Activated B cell treated with CpG ODN at 0.5 μM for 24 hours (primary cell): ENCODE measurements at regions of chr11 and their contacts with region 1.

Region 1: GRCh38 chr11:6481012-6481923 is at the starts of genes ARFIP2 and TIMM10B:
- DNase-seq: peak; percentile 92
- ATAC-seq: peak; percentile 95
- H3K4me3 Mint-ChIP-seq: peak within 1 kb of the TSS; percentile 95
- H3K27ac Mint-ChIP-seq: peak within 1 kb of the TSS; percentile 97
- H3K4me1 Mint-ChIP-seq: peaks cover 42% of the 10 kb centered on the region
- H3K27me3 Mint-ChIP-seq: no peaks in the 10 kb centered on the region
- CTCF ChIP-seq: no peak
- total RNA-seq, gene ARFIP2: 40.6 and 43.1 TPM in 2 replicates
- total RNA-seq, gene TIMM10B: 48.0 and 60.0 TPM in 2 replicates

Region 2: DNA sequence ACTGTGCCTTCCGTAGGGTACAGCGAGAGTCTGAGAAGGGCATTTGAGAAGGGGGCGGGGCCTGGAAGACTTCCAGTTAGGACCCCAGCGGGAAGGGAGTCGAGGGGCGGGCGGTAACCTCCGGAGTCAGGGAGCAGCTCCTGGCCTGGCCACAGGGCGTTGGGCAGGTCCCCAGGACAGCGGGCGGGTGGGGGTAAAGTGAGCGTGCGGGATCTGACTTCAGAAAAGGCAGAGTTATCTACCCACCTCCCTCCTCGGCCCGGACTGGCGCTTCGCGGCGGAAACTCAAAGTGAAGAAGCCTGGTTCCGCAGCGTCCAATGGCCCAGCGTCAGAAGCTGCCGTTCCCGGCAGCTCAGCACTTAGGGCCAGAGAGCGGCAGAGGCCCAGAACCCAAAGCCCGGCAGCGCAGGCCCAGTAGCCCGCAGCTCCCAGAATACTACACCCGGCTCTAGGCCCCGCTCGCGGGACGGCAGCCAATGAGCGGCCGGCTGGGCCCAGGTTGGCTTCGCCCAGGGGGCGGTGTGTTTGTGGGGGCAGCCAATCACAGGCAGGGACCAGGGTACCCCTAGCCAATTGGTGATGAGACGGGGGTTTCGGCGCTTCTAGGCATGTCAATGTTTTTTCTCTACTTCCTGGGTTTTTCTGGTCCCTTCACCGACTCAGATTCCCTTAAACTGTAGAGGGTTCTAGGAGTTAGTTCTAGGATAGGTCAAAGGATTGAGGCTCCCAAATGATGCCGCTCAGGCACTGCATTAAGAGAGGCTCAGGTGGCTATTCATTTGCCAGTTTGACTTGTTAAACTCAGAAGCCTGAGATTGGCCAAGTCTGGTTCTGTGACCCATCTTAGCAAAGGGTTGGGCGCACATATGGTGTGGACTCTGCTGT is 1873.2 kb before region 1 on chr11 and contains the start of gene TRIM68:
- CTCF ChIA-PET with region 1: no interaction called
- POLR2A ChIA-PET with region 1: no interaction called
- intact Hi-C with region 1: loop called (anchors 5 kb)
- DNase-seq: peak; percentile 87
- ATAC-seq: peak; percentile 100
- H3K4me3 Mint-ChIP-seq: peak within 1 kb of the TSS; percentile 95
- H3K27ac Mint-ChIP-seq: peak within 1 kb of the TSS; percentile 91
- H3K4me1 Mint-ChIP-seq: peaks cover 43% of the 10 kb centered on the region
- H3K27me3 Mint-ChIP-seq: no peaks in the 10 kb centered on the region
- CTCF ChIP-seq: no peak
- total RNA-seq, gene TRIM68: 15.2 and 16.9 TPM in 2 replicates

Region 3: GRCh38 chr11:6389921-6390724 is 91.1 kb before region 1 on chr11 and contains the start of gene SMPD1:
- CTCF ChIA-PET with region 1: interaction called, 3 read pairs
- POLR2A ChIA-PET with region 1: interaction called, 14 read pairs
- intact Hi-C with region 1: loop called (anchors 1 kb)
- DNase-seq: peak; percentile 86
- ATAC-seq: peak; percentile 93
- H3K4me3 Mint-ChIP-seq: peak within 1 kb of the TSS; percentile 95
- H3K27ac Mint-ChIP-seq: peak within 1 kb of the TSS; percentile 99
- H3K4me1 Mint-ChIP-seq: peaks cover 36% of the 10 kb centered on the region
- H3K27me3 Mint-ChIP-seq: no peaks in the 10 kb centered on the region
- CTCF ChIP-seq: no peak
- total RNA-seq, gene SMPD1: 14.1 and 16.9 TPM in 2 replicates

Region 4: GRCh38 chr11:6603287-6604080 is 122.2 kb after region 1 on chr11 and contains the starts of genes ILK and RRP8:
- CTCF ChIA-PET with region 1: no interaction called
- POLR2A ChIA-PET with region 1: interaction called, 9 read pairs
- intact Hi-C with region 1: loop called (anchors 1 kb)
- DNase-seq: peak; percentile 78
- ATAC-seq: peak; percentile 88
- H3K4me3 Mint-ChIP-seq: no peak within 1 kb of the TSS
- H3K27ac Mint-ChIP-seq: no peak within 1 kb of the TSS
- H3K4me1 Mint-ChIP-seq: peaks cover 10% of the 10 kb centered on the region
- H3K27me3 Mint-ChIP-seq: no peaks in the 10 kb centered on the region
- CTCF ChIP-seq: no peak
- total RNA-seq, gene ILK: 113 and 128 TPM in 2 replicates
- total RNA-seq, gene RRP8: 29.1 and 30.5 TPM in 2 replicates

Region 5: GRCh38 chr11:6619004-6619745 is 137.9 kb after region 1 on chr11 and contains the start of gene TPP1:
- CTCF ChIA-PET with region 1: no interaction called
- POLR2A ChIA-PET with region 1: interaction called, 17 read pairs
- intact Hi-C with region 1: loop called (anchors 1 kb)
- DNase-seq: peak; percentile 87
- ATAC-seq: peak; percentile 89
- H3K4me3 Mint-ChIP-seq: no peak within 1 kb of the TSS
- H3K27ac Mint-ChIP-seq: no peak within 1 kb of the TSS
- H3K4me1 Mint-ChIP-seq: peaks cover 7% of the 10 kb centered on the region
- H3K27me3 Mint-ChIP-seq: no peaks in the 10 kb centered on the region
- CTCF ChIP-seq: no peak
- total RNA-seq, gene TPP1: 98.2 and 123 TPM in 2 replicates

Region 6: DNA sequence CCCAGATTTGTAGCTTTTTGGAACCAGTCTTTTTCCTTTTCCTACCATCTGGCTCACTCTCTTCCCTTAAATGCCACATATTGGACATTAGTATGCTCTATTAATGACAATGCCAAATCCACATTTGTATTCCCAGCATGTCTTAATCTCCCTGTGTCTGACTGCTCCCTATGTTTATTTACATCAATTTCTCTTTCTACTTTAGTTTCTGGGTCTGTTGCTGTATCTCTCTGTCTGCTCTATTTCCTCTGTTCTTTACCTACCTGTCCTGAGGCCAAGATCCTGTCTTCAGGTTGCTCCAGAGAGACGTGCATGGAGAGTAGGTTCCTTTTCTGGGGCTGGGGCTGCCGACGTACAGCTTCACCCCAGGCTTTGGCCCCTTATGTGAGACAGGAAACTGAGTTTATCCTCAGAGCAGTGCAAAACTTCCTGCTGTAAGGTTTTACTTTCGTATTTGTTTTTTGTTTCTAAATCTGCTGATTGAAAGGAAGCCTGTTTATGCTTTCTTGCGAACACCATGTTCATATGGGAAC is 264.9 kb after region 1 on chr11:
- CTCF ChIA-PET with region 1: no interaction called
- POLR2A ChIA-PET with region 1: interaction called, 6 read pairs
- intact Hi-C with region 1: loop called (anchors 2 kb)
- DNase-seq: peak; percentile 24
- ATAC-seq: peak; percentile 80
- H3K4me3 Mint-ChIP-seq: no peak overlapping the region
- H3K27ac Mint-ChIP-seq: no peak overlapping the region
- H3K4me1 Mint-ChIP-seq: peaks cover 2% of the 10 kb centered on the region
- H3K27me3 Mint-ChIP-seq: no peaks in the 10 kb centered on the region
- CTCF ChIP-seq: no peak